AG04449 (cell line): ENCODE measurements at regions of chr4 and their contacts with region 1.

Region 1: GRCh38 chr4:147707865-147708672 is 23.8 kb upstream of the ARHGAP10 start:
- DNase-seq: no peak
- H3K4me3 ChIP-seq: no peak overlapping the region
- CTCF ChIP-seq: peak; percentile 67

Region 2: GRCh38 chr4:147578051-147578476 is 130.0 kb before region 1 on chr4:
- CTCF ChIA-PET with region 1: no interaction called
- POLR2A ChIA-PET with region 1: no interaction called
- DNase-seq: peak; percentile 84
- H3K4me3 ChIP-seq: no peak overlapping the region
- CTCF ChIP-seq: no peak

Region 3: GRCh38 chr4:147683717-147684700 is 24.1 kb before region 1 on chr4 and contains the start of gene PRMT9:
- CTCF ChIA-PET with region 1: interaction called, 13 read pairs
- POLR2A ChIA-PET with region 1: no interaction called
- DNase-seq: peak; percentile 63
- H3K4me3 ChIP-seq: peak within 1 kb of the TSS; percentile 88
- CTCF ChIP-seq: no peak

Region 4: GRCh38 chr4:147696863-147697262 is 11.2 kb before region 1 on chr4:
- CTCF ChIA-PET with region 1: interaction called, 26 read pairs
- POLR2A ChIA-PET with region 1: no interaction called
- DNase-seq: no peak
- H3K4me3 ChIP-seq: no peak overlapping the region
- CTCF ChIP-seq: no peak

Region 5: GRCh38 chr4:147731580-147732517 is 23.8 kb after region 1 on chr4 and contains the start of gene ARHGAP10:
- CTCF ChIA-PET with region 1: interaction called, 15 read pairs
- POLR2A ChIA-PET with region 1: no interaction called
- DNase-seq: no peak
- H3K4me3 ChIP-seq: peak within 1 kb of the TSS; percentile 80
- CTCF ChIP-seq: no peak

Region 6: DNA sequence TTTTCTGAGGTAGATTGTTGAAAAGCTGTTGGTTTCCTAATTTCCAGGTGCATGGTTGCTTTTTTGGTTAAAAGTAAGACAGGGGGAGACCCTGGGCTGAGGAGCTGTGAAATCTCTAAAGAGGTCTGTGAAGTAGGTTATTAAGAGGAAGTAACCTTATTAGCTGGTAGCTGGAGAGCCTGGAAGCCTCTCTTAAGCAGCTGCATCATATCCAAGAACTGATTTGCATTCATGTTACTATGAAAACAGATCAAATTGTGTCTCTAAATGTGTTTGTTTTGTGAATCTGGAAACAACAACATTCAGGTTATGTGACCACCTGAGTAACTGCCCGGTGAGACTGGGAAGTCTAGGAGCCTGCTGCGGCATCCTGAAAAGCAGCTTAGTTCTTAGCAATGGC is 78.0 kb after region 1 on chr4:
- CTCF ChIA-PET with region 1: interaction called, 11 read pairs
- POLR2A ChIA-PET with region 1: no interaction called
- DNase-seq: no peak
- H3K4me3 ChIP-seq: no peak overlapping the region
- CTCF ChIP-seq: no peak